ENCODE measurements at regions of chr15 and their contacts with region 1.

Region 1: DNA sequence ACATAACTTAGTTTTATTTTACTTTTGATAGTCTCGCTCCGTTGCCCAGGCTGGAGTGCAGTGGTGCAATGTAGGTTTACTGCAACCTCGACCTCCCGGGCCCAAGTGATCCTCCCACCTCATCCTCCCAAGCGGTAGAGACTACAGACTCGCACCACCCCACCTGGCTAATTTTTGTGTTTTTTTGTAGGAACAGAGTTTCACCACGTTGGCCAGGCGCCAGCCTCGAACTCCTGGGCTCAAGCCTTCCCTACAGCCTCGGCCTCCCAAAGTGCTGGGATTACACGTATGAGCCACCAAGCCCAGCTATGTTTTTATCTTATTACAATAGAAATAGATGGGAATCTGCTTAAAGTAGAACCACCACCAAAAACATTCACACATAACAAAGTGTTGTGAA is 2.9 kb downstream of the RNU5A-1 start:
- DNase-seq: no peak
- ATAC-seq: no peak

Region 2: DNA sequence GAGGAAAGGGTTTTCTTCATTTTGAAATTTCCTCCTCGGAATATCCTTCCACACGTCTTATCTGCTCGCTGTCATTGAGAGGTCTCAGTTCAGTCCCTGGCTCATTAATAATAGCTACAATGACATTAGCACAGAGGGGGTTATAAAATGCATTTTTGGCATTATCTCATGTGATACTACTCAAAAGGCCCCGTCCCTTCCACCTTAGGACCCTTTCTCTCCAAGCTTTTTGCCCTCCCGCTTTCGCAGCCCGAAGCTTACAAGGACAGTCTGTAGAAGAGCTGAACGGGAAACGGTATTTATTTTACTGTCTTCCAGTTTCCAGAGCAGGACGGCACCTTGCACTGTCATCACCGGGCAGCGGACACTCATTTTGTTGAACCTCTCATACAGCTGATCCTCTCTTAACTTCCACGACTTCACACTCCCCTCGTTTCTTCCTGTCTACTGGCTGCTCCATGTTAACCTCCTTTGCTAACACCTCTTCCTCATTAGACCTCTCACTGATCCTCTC is 462.7 kb before region 1 on chr15:
- intact Hi-C with region 1: no loop called
- DNase-seq: no peak
- ATAC-seq: peak; percentile 11

Region 3: DNA sequence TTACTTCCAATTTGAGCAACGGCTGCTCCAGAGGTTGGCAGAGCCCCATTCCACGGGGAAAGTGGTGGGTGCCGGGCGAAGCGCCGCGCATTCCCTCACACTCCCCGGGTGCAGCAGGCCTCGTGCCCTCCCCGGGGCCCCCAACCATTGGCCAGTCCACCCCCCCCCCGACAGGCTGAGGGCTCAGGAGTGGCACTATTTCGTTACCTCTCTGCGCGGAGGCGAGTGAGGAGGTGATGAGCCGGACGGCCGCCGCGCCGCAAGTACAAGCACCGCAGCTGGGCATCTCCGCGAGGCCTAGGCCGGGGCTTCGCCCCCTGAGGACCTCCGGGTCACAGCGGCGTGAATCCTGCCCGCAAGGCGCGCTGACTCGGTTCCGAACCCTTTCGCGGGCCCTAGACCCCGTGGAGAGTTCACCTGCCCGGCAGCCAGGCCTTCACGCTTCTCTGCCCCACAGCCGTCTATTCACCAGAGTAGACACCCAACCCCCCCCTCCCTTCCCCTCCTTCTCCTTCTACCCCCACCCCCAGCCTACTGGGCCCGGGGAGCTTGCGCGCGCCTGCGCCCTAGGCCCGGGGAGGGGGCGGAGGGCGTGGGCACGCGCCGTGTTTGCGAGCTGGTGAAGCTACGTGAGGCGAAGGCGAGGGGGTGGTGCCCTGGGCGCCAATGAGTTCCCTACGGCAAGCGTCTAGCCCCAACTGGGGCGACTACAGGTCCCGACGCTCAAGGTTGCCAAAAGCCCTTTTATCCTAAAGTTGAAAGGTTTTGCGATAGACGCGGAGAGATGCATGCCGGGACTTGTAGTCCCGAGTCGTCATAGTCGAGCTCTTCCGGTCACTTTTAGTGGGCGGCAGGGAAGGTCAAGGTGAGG is 113.6 kb before region 1 on chr15 and contains the start of gene CLPX:
- intact Hi-C with region 1: loop called (anchors 5 kb)
- DNase-seq: peak; percentile 95
- ATAC-seq: peak; percentile 96
- total RNA-seq, gene CLPX: 58.3 TPM